Dorsolateral prefrontal cortex (tissue), 120 donors: ENCODE measurements at regions of chr2 and their contacts with region 1.

Region 1: GRCh38 chr2:189661148-189661956 is at the start of gene ASNSD1:
- DNase-seq: peak; percentile 90 to 96 (median 92)
- H3K4me3 ChIP-seq: peak within 1 kb of the TSS; percentile 66 to 100 (median 94)
- H3K27ac ChIP-seq: peak within 1 kb of the TSS in 58 of 59 donors; percentile 10 to 98 (median 87)
- H3K27me3 ChIP-seq: no peaks in the 10 kb centered on the region
- CTCF ChIP-seq: peak; percentile 97 to 100 (median 100)
- total RNA-seq, gene ASNSD1: 22.6 to 60.0 (median 42.1) TPM

Region 2: GRCh38 chr2:189674374-189675112 is 13.2 kb after region 1 on chr2 and contains the start of gene ANKAR:
- intact Hi-C with region 1: loop called in 1 of 2 experiments (anchors 1 kb)
- DNase-seq: peak; percentile 79 to 91 (median 84)
- H3K4me3 ChIP-seq: peak within 1 kb of the TSS; percentile 58 to 96 (median 79)
- H3K27ac ChIP-seq: peak within 1 kb of the TSS; percentile 86 to 99 (median 96)
- H3K27me3 ChIP-seq: no peaks in the 10 kb centered on the region
- CTCF ChIP-seq: peak; percentile 41 to 97 (median 85)
- total RNA-seq, gene ANKAR: 10.6 to 36.5 (median 18.1) TPM

Region 3: GRCh38 chr2:189698020-189698887 is 36.9 kb after region 1 on chr2:
- intact Hi-C with region 1: loop called (anchors 5 kb)
- DNase-seq: peak in 2 of 10 donors; percentile 30 to 63
- H3K4me3 ChIP-seq: peak overlapping the region in 23 of 59 donors; percentile 0 to 42 (median 22)
- H3K27ac ChIP-seq: peak overlapping the region in 4 of 59 donors; percentile 4 to 43 (median 18)
- H3K27me3 ChIP-seq: no peaks in the 10 kb centered on the region
- CTCF ChIP-seq: peak; percentile 39 to 90 (median 75)